ENCODE measurements at regions of chr9 and their contacts with region 1.

Region 1: DNA sequence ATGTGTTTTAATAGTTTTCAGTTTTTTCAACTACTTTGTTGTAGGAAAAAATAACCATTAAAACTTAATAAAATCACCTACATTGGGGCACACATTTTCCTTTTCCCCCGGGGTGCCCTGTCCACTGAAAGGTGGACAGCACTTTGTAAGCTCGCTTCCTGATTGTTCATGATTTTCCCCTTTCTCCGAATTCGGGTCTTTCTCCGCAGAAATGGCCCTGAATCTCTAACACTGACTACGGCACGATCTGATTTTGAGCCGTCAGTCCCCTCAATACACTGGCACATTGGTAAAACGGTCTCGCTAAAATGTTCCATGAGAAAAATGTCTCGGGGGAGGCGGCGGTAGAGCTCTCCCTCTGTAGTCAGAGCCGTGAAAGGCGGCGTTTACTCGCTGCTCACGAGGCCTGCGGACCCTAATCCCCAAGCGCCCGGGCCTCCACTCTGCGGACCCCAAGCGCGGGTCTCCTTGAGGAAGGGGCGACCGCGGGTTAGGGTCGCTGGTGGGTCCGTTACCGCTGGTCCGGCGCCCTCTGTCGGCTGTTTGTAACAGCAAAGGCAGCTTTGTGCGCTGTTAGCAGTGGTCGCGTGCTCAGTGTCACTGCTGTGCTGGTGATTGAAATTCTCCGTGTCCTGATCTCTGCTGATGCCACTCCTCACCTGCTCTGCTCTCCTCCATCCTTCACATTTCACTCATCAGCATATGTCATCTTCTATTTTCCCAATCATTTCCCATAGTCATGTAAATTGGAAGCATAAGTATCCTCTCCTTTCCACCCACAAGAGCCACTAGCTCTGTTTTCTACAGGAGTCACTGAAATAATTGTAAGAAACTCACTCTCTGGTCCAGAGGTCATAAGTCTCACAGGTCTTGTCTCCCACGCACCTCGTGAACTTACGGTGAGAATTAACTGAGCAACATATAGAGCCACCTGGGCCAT is 10.8 kb upstream of the IFNA2 start:
- DNase-seq: peak; percentile 65
- H3K4me3 ChIP-seq: peak overlapping the region; percentile 49 to 73
- H3K27ac ChIP-seq: no peak overlapping the region
- H3K4me1 ChIP-seq: peaks cover 0 to 4% of the 10 kb centered on the region in 2 experiments; a peak in 2 of 4 replicates
- H3K27me3 ChIP-seq: peaks cover 49% of the 10 kb centered on the region; the same call in 1 of the 2 replicates
- CTCF ChIP-seq: peak; percentile 95
- EP300 ChIP-seq: no peak
- RAD21 ChIP-seq: peak; percentile 64

Region 2: DNA sequence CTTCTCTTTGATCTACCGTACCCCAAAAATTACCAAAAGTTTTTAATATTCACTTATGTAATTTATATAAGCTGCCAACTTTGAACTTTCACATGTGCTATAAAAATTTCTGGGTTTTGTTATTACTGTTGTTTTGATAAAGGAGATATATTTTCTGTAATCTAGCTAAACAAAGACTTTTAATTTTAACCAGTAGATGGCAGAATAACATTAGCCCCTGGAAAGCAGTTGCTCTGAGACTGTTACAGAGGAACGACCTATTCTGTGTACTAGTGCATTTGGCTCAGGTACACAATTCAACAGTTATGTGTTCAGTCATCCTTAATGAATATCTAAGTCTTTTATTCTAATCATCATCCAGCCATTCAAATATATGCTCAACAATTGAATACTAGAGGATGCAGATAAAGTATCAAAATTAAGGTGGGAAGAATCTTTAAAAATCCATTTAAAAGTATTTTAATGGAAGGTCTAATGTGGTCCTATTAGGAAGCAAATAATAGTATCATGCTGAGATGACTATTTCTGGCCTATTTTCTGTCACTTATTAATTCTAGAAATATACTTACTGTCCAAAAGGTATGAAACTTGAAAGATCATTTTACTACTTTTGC is 69.4 kb before region 1 on chr9:
- CTCF ChIA-PET with region 1: interaction called, 239 read pairs
- POLR2A ChIA-PET with region 1: no interaction called
- DNase-seq: peak; percentile 45
- H3K4me3 ChIP-seq: no peak overlapping the region
- H3K27ac ChIP-seq: 0 out of 4 replicates have a peak overlapping the region, but pooled peaks of 1 of the 2 experiments have one; percentile 2
- H3K4me1 ChIP-seq: peaks cover 6 to 8% of the 10 kb centered on the region in 2 experiments; a peak in 3 of 4 replicates
- H3K27me3 ChIP-seq: no peaks in the 10 kb centered on the region
- CTCF ChIP-seq: peak; percentile 80
- EP300 ChIP-seq: no peak
- RAD21 ChIP-seq: peak; percentile 84

Region 3: DNA sequence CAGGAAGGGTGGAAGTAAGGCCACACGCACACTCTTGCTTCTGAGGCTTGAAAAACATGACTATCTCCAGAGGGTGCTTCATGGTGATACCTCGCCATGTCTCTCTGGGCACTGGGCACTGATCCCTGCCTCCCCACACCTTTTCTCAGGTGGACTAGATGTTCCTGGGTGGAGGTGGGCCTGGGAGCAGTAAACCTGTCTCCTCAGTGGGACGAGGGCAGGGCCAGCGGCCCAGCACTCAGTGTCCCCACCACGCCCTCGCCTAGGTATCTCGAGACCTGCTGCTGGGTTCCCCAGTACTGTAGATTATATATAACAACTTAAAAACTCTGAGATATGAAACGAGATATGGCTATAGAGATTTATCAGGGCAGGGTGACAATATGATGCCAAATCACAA is 33.8 kb before region 1 on chr9:
- CTCF ChIA-PET with region 1: interaction called, 12 read pairs
- POLR2A ChIA-PET with region 1: no interaction called
- DNase-seq: no peak
- H3K4me3 ChIP-seq: no peak overlapping the region
- H3K27ac ChIP-seq: no peak overlapping the region
- H3K4me1 ChIP-seq: no peaks in the 10 kb centered on the region
- H3K27me3 ChIP-seq: no peaks in the 10 kb centered on the region; the same call in 1 of the 2 replicates
- CTCF ChIP-seq: no peak
- EP300 ChIP-seq: no peak
- RAD21 ChIP-seq: no peak

Region 4: GRCh38 chr9:21408817-21409216 is 12.8 kb after region 1 on chr9 and contains the start of gene IFNA8:
- CTCF ChIA-PET with region 1: interaction called, 15 read pairs
- POLR2A ChIA-PET with region 1: no interaction called
- DNase-seq: no peak
- H3K4me3 ChIP-seq: no peak within 1 kb of the TSS
- H3K27ac ChIP-seq: no peak within 1 kb of the TSS
- H3K4me1 ChIP-seq: no peaks in the 10 kb centered on the region
- H3K27me3 ChIP-seq: peaks cover 6% of the 10 kb centered on the region; the same call in 1 of the 2 replicates
- CTCF ChIP-seq: no peak
- EP300 ChIP-seq: no peak
- RAD21 ChIP-seq: no peak
- polyA plus RNA-seq, gene IFNA8: not detected in 2 replicates

Measured in SK-N-SH (cell line).